ENCODE measurements at regions of chr17 and their contacts with region 1.

Region 1: DNA sequence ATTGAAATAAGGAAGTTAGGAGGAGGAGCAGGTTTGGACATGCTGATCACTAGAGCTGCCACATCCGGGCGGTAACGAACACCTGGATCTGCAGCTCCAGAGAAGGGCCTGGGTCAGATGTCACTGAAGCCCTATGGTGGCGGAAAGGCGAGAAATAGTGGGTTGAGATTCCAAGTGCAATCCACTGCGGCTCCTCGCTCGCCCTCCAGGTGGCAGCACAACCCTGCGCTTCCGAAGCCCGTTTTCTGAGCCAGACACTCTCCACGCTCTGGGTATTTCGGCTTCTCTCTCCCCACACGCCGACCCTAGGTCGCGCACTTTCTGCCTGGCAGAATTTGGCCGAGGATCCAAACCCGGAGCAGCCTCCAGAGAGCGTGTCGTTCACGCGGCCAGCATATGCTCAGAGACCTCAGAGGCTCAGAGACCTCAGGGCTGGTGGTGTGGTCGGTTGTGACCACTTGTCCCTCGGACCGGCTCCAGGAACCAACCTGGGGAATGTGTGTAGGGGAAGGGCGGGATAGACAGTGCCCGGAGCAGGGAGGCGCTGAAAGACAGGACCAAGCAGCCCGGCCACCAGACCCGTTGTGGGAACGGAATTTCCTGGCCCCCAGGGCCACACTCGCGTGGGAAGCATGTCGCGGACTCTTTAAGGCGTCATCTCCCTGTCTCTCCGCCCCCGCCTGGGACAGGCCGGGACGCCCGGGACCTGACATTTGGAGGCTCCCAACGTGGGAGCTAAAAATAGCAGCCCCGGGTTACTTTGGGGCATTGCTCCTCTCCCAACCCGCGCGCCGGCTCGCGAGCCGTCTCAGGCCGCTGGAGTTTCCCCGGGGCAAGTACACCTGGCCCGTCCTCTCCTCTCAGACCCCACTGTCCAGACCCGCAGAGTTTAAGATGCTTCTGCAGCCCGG is 744 bp upstream of the SLC2A4 start:
- DNase-seq: peak; percentile 76 to 88 (median 85)
- ATAC-seq: peak; percentile 95
- H3K4me3 ChIP-seq: peak overlapping the region; percentile 66
- H3K4me3 Mint-ChIP-seq: peak overlapping the region; percentile 77 to 87 (median 84)
- H3K27ac ChIP-seq: no peak overlapping the region
- H3K27ac Mint-ChIP-seq: peak overlapping the region in 7 of 9 donors; percentile 6 to 88 (median 51)
- H3K4me1 ChIP-seq: peaks cover 11 to 23% of the 10 kb centered on the region in 2 donors
- H3K4me1 Mint-ChIP-seq: peaks cover 14 to 31% (median 21%) of the 10 kb centered on the region in 7 donors
- H3K27me3 ChIP-seq: no peaks in the 10 kb centered on the region
- H3K27me3 Mint-ChIP-seq: peaks cover 6 to 44% (median 17%) of the 10 kb centered on the region in 5 donors

Region 2: GRCh38 chr17:7296189-7296902 is 15.6 kb after region 1 on chr17:
- CTCF ChIA-PET with region 1: interaction called, 33 read pairs
- POLR2A ChIA-PET with region 1: interaction called, 13 read pairs
- intact Hi-C with region 1: loop called (anchors 1 kb)
- DNase-seq: peak in 5 of 9 donors; percentile 41 to 86 (median 62)
- ATAC-seq: peak; percentile 63
- H3K4me3 ChIP-seq: no peak overlapping the region
- H3K4me3 Mint-ChIP-seq: peak overlapping the region; percentile 18 to 89 (median 52)
- H3K27ac ChIP-seq: no peak overlapping the region
- H3K27ac Mint-ChIP-seq: peak overlapping the region in 2 of 9 donors; percentile 51 to 66
- H3K4me1 ChIP-seq: peaks cover 12 to 26% of the 10 kb centered on the region in 2 donors
- H3K4me1 Mint-ChIP-seq: peaks cover 6 to 30% (median 25%) of the 10 kb centered on the region in 7 donors
- H3K27me3 ChIP-seq: no peaks in the 10 kb centered on the region
- H3K27me3 Mint-ChIP-seq: peaks cover 4 to 54% (median 18%) of the 10 kb centered on the region in 5 donors

Region 3: DNA sequence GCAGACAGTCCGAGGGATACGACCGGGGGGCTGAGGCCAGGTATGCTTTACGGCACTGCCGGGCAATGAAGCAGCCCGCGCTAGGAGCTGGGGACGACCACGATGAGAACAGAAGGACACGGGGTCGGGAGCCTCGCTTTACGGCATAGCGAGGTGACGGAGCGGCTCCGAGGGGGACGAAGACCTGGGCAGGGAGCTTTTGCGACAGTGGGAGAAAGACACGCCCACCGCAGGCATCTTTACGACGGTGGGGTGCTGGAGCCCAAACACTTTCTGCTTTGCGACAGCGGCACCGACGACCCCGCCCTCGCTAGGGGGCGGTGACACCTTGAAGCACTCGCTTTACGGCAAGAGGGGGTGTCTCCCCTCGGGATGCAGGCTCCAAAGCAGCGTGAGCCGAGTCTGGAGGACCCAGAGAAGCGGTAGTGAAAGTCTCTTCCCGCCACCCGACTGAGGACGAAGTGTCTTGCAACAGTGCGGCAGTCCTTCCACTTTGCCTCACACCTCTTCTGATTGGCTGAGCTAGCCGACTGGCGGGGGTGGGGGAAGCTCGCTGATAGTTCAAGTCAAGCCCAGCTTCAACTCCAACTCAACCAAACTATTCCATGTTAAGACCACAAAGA is 48.7 kb after region 1 on chr17:
- CTCF ChIA-PET with region 1: interaction called, 18 read pairs
- POLR2A ChIA-PET with region 1: no interaction called
- intact Hi-C with region 1: loop called in 1 of 2 experiments (anchors 1 kb)
- DNase-seq: peak; percentile 84 to 98 (median 98)
- ATAC-seq: peak; percentile 91
- H3K4me3 ChIP-seq: peak overlapping the region; percentile 95
- H3K4me3 Mint-ChIP-seq: peak overlapping the region; percentile 89 to 100 (median 96)
- H3K27ac ChIP-seq: peak overlapping the region; percentile 88
- H3K27ac Mint-ChIP-seq: peak overlapping the region; percentile 93 to 99 (median 97)
- H3K4me1 ChIP-seq: peaks cover 15 to 36% of the 10 kb centered on the region in 2 donors
- H3K4me1 Mint-ChIP-seq: peaks cover 29 to 61% (median 44%) of the 10 kb centered on the region in 7 donors
- H3K27me3 ChIP-seq: no peaks in the 10 kb centered on the region
- H3K27me3 Mint-ChIP-seq: no peaks in the 10 kb centered on the region

Region 4: GRCh38 chr17:7416323-7416722 is 135.5 kb after region 1 on chr17:
- CTCF ChIA-PET with region 1: no interaction called
- POLR2A ChIA-PET with region 1: no interaction called
- intact Hi-C with region 1: loop called in 1 of 2 experiments (anchors 2 kb)
- DNase-seq: peak in 1 of 9 donors; percentile 12
- ATAC-seq: no peak
- H3K4me3 ChIP-seq: no peak overlapping the region
- H3K4me3 Mint-ChIP-seq: no peak overlapping the region
- H3K27ac ChIP-seq: no peak overlapping the region
- H3K27ac Mint-ChIP-seq: peak overlapping the region in 1 of 9 donors; percentile 6
- H3K4me1 ChIP-seq: no peaks in the 10 kb centered on the region
- H3K4me1 Mint-ChIP-seq: peaks cover 0 to 7% (median 0%) of the 10 kb centered on the region in 7 donors
- H3K27me3 ChIP-seq: no peaks in the 10 kb centered on the region
- H3K27me3 Mint-ChIP-seq: no peaks in the 10 kb centered on the region